ENCODE measurements at regions of chr6 and their contacts with region 1.

Region 1: DNA sequence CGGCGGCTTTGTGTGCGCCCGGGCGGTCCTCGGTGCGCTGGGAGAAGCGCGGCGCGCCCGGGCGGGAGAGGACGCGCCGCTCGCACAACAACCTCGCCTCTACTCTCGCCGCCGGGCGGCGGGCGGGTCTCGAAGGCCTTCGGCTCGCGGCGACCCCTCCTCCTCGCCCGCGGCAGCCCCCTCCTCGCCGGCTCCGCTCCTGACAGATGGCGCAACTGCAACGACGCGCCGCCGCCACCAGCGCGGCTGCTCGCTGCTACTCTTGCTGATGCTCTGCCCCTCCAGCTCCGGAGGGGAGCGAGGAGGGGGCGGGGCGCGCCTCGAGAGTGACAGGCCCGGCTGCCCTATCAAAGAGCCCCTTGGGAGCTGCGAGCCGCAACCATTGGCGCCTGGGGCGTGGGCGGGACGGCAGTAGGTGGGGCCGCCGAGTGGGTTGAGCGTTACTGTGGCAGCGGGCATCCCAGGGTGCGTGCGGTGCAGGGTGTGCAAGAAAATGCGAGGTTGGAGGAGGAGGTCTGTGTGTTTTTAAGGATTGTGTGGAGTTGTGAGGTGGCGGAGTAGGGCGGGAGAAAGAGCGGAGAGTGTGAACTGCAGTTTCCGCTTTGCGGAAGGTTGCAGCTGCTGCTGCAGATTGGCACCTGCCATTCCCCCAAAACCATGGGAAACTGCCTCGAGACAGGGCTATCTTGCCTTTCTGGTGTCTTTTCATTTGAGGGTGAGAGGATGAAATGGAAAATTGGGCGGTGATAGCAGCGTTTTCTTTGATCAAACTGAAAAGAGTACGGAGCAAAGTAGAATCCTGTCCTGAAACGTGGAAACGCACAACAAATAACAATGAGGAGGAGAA is at the start of gene FYN:
- DNase-seq: peak; percentile 98 to 99
- H3K4me3 ChIP-seq: peak within 1 kb of the TSS; percentile 35 to 62 (median 57)
- H3K27ac ChIP-seq: peak within 1 kb of the TSS; percentile 48 to 73 (median 68)
- H3K4me1 ChIP-seq: peaks cover 0 to 24% of the 10 kb centered on the region in 2 donors
- H3K27me3 ChIP-seq: no peaks in the 10 kb centered on the region
- CTCF ChIP-seq: peak in 5 of 6 experiments; percentile 24 to 73 (median 51)
- POLR2A ChIP-seq: peak; percentile 0 to 95
- total RNA-seq, gene FYN: 67.0 to 206 (median 95.9) TPM

Region 2: GRCh38 chr6:111709615-111710398 is 163.6 kb before region 1 on chr6:
- intact Hi-C with region 1: loop called (anchors 10 kb)
- DNase-seq: peak; percentile 59 to 76
- H3K4me3 ChIP-seq: no peak overlapping the region
- H3K27ac ChIP-seq: peak overlapping the region in 1 of 3 donors; percentile 2
- H3K4me1 ChIP-seq: peaks cover 4 to 20% of the 10 kb centered on the region in 2 donors
- H3K27me3 ChIP-seq: no peaks in the 10 kb centered on the region
- CTCF ChIP-seq: peak; percentile 41 to 97 (median 75)
- POLR2A ChIP-seq: no peak

Region 3: DNA sequence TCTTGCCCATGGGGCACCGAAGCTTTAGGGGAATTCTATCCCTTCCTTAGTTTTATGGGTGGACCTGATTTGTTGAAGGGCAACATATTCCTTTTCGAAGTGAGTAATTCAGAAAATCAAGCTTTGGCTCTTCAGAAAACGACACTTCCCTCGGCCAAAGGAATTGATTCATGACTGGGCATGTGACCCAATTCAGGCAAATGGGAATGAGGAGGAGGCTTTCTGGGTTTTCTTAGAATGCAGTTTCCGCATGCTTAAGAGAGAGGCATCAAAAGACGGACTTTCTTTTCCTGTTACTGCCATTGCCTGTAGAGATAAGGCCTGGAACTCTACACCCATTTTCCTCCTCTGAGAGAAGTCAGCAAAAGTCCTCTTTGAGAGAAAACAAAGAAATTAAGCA is 653.2 kb after region 1 on chr6:
- intact Hi-C with region 1: no loop called
- DNase-seq: no peak
- H3K4me3 ChIP-seq: no peak overlapping the region
- H3K27ac ChIP-seq: no peak overlapping the region
- H3K4me1 ChIP-seq: no peaks in the 10 kb centered on the region
- H3K27me3 ChIP-seq: no peaks in the 10 kb centered on the region
- CTCF ChIP-seq: no peak
- POLR2A ChIP-seq: no peak